ENCODE measurements at regions of chr19 and their contacts with region 1.

Region 1: GRCh38 chr19:17305517-17306284 is at the start of gene MRPL34:
- DNase-seq: peak; percentile 97
- ATAC-seq: peak; percentile 70
- H3K4me3 Mint-ChIP-seq: peak within 1 kb of the TSS; percentile 86
- H3K27ac Mint-ChIP-seq: peak within 1 kb of the TSS; percentile 92
- H3K4me1 Mint-ChIP-seq: peaks cover 46% of the 10 kb centered on the region
- H3K27me3 Mint-ChIP-seq: no peaks in the 10 kb centered on the region
- total RNA-seq, gene MRPL34: 72.0 to 88.6 TPM

Region 2: DNA sequence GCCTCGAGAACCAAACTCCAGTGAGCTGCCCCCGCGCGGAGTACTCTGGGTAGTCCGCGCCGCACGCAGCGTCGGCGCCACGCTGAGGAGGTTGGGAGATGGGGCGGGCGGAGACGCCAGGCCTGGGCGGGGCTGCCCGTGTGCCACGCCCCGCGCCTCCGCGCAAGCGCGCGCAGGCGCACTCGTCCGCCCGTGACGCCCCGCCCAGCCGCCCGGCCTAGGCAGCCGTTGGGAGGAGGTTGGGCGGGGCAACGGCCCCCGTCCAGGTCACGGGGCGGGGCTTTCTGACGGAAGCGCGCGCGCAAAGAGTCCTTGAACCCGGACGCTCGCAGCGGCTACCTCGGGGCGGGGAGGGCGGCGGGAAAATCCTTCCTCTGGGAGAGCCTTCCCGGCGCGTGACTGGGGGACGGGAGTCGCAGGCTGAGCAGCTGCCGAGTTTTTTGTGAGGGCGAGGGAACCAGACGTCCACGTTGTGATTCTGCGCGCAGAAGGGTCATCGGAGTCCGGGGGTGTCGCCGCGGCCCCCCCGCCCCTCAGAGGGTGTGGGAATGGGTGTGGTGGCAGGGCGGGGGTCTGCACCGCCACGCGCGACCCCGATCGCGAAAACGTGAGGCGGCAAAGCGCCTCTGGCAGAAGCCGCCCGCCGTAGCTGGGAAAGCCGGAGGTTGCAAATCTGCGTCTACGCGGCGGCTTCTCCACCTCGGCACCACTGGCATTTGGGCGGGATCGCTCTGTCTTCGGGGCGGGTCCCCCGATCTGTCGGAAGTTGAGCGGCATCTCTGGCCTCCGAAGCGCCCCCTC is 677.3 kb before region 1 on chr19 and contains the start of gene MED26:
- CTCF ChIA-PET with region 1: no interaction called
- POLR2A ChIA-PET with region 1: no interaction called
- intact Hi-C with region 1: loop called in 1 of 2 experiments (anchors 1 kb)
- DNase-seq: peak; percentile 98
- ATAC-seq: peak; percentile 92
- H3K4me3 Mint-ChIP-seq: peak within 1 kb of the TSS; percentile 87
- H3K27ac Mint-ChIP-seq: peak within 1 kb of the TSS; percentile 100
- H3K4me1 Mint-ChIP-seq: peaks cover 39% of the 10 kb centered on the region
- H3K27me3 Mint-ChIP-seq: no peaks in the 10 kb centered on the region
- total RNA-seq, gene MED26: 13.6 to 14.5 TPM

Region 3: GRCh38 chr19:17090583-17090982 is 215.1 kb before region 1 on chr19:
- CTCF ChIA-PET with region 1: no interaction called
- POLR2A ChIA-PET with region 1: no interaction called
- intact Hi-C with region 1: no loop called
- DNase-seq: peak; percentile 68
- ATAC-seq: peak; percentile 88
- H3K4me3 Mint-ChIP-seq: no peak overlapping the region
- H3K27ac Mint-ChIP-seq: peak overlapping the region; percentile 69
- H3K4me1 Mint-ChIP-seq: peaks cover 34% of the 10 kb centered on the region
- H3K27me3 Mint-ChIP-seq: no peaks in the 10 kb centered on the region

Region 4: GRCh38 chr19:17215125-17215971 is 90.4 kb before region 1 on chr19 and contains the start of gene USE1:
- CTCF ChIA-PET with region 1: no interaction called
- POLR2A ChIA-PET with region 1: interaction called, 3 read pairs
- intact Hi-C with region 1: loop called in 1 of 2 experiments (anchors 1 kb)
- DNase-seq: peak; percentile 93
- ATAC-seq: peak; percentile 97
- H3K4me3 Mint-ChIP-seq: peak within 1 kb of the TSS; percentile 80
- H3K27ac Mint-ChIP-seq: peak within 1 kb of the TSS; percentile 95
- H3K4me1 Mint-ChIP-seq: peaks cover 21% of the 10 kb centered on the region
- H3K27me3 Mint-ChIP-seq: no peaks in the 10 kb centered on the region
- total RNA-seq, gene USE1: 22.6 to 24.5 TPM

Region 5: GRCh38 chr19:17282488-17283255 is 23.0 kb before region 1 on chr19:
- CTCF ChIA-PET with region 1: interaction called, 13 read pairs
- POLR2A ChIA-PET with region 1: no interaction called
- intact Hi-C with region 1: no loop called
- DNase-seq: peak; percentile 90
- ATAC-seq: peak; percentile 96
- H3K4me3 Mint-ChIP-seq: peak overlapping the region; percentile 73
- H3K27ac Mint-ChIP-seq: peak overlapping the region; percentile 59
- H3K4me1 Mint-ChIP-seq: peaks cover 8% of the 10 kb centered on the region
- H3K27me3 Mint-ChIP-seq: peaks cover 3% of the 10 kb centered on the region

Region 6: GRCh38 chr19:17327651-17328516 is 22.2 kb after region 1 on chr19:
- CTCF ChIA-PET with region 1: interaction called, 5 read pairs
- POLR2A ChIA-PET with region 1: interaction called, 4 read pairs
- intact Hi-C with region 1: loop called in 1 of 2 experiments (anchors 1 kb)
- DNase-seq: peak; percentile 79
- ATAC-seq: peak; percentile 64
- H3K4me3 Mint-ChIP-seq: peak overlapping the region; percentile 56
- H3K27ac Mint-ChIP-seq: peak overlapping the region; percentile 51
- H3K4me1 Mint-ChIP-seq: peaks cover 13% of the 10 kb centered on the region
- H3K27me3 Mint-ChIP-seq: no peaks in the 10 kb centered on the region

Region 7: GRCh38 chr19:17370026-17370587 is 64.4 kb after region 1 on chr19:
- CTCF ChIA-PET with region 1: interaction called, 4 read pairs
- POLR2A ChIA-PET with region 1: interaction called, 12 read pairs
- intact Hi-C with region 1: no loop called
- DNase-seq: no peak
- ATAC-seq: no peak
- H3K4me3 Mint-ChIP-seq: no peak overlapping the region
- H3K27ac Mint-ChIP-seq: no peak overlapping the region
- H3K4me1 Mint-ChIP-seq: peaks cover 7% of the 10 kb centered on the region
- H3K27me3 Mint-ChIP-seq: peaks cover 4% of the 10 kb centered on the region

Region 8: DNA sequence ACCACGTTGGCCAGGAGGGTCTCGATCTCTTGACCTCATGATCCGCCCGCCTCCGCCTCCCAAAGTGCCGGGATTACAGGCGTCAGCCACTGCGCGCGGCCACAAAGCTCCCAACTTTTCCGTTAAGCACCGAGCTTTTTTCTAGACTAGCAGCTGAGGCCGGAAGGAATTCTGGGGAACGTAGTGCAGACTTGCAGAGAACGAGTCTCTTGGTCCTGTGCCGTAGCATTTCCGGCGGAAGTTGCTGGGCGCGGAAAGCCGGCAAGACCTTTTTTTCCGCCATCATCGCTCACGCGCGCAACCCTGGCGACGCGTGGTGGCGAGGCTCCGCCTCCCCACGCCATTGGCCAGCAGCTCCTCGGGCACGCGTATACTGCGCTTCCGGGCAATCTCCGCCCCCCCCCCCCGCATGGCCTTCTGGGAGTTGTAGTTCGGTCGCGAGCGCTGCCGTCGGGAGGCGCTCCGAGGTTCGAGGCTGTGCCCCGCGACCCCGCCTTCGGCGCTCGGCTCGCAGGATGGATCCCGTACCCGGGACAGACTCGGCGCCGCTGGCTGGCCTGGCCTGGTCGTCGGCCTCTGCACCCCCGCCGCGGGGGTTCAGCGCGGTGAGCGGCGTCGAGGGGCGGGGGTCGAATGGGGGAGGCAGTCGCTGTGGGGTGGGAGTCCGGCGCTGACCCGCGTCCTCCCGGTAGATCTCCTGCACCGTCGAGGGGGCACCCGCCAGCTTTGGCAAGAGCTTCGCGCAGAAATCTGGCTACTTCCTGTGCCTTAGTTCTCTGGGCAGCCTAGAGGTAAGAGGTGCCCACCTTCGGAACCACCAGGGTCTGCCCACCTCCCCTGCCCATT is 114.1 kb after region 1 on chr19 and contains the start of gene MVB12A:
- CTCF ChIA-PET with region 1: interaction called, 6 read pairs
- POLR2A ChIA-PET with region 1: interaction called, 4 read pairs
- intact Hi-C with region 1: loop called in 1 of 2 experiments (anchors 1 kb)
- DNase-seq: peak; percentile 97
- ATAC-seq: peak; percentile 95
- H3K4me3 Mint-ChIP-seq: peak within 1 kb of the TSS; percentile 91
- H3K27ac Mint-ChIP-seq: peak within 1 kb of the TSS; percentile 87
- H3K4me1 Mint-ChIP-seq: peaks cover 11% of the 10 kb centered on the region
- H3K27me3 Mint-ChIP-seq: no peaks in the 10 kb centered on the region
- total RNA-seq, gene MVB12A: 27.6 to 32.6 TPM

Region 9: GRCh38 chr19:17431417-17431816 is 125.7 kb after region 1 on chr19:
- CTCF ChIA-PET with region 1: no interaction called
- POLR2A ChIA-PET with region 1: no interaction called
- intact Hi-C with region 1: no loop called
- DNase-seq: no peak
- ATAC-seq: no peak
- H3K4me3 Mint-ChIP-seq: no peak overlapping the region
- H3K27ac Mint-ChIP-seq: no peak overlapping the region
- H3K4me1 Mint-ChIP-seq: no peaks in the 10 kb centered on the region
- H3K27me3 Mint-ChIP-seq: no peaks in the 10 kb centered on the region